OCI-LY7 (cell line): ENCODE measurements at regions of chr7 and their contacts with region 1.

Region 1: DNA sequence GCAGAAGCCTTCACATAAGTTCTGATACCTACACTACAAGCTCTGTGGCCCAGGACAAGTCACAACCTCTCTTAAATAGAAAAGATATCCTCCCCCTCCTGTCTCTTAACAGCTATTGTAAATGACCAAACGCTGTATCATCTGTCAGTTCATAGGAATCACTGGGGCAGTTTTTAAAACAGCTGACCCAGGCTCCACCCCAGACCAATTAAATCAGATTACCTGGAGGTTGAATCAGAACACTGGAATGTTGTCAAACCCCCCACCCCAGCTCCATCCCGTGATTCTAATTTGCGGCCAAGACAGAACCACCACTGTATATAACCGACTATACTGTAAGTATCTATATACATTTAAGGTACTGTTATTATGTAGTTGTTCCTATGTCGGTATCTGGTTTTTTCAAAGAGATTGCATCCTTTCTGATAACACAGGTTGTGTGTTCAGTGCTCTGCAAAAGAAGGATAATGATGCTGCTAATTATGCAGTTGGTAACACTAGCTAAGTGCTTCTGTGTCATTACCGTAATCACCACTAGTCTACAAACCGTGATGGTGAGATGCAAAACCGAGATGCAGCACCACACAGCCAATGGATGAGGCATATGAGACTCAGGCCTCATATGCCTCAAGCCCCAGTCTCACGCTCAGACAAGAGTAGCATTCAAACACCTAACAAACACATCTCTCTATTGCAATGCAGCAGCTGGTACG is 47.4 kb downstream of the TNS3 start:
- DNase-seq: peak; percentile 12
- H3K4me3 ChIP-seq: no peak overlapping the region
- H3K27ac ChIP-seq: no peak overlapping the region
- H3K4me1 ChIP-seq: no peaks in the 10 kb centered on the region
- CTCF ChIP-seq: peak; percentile 43; the same call in 1 of the 2 replicates

Region 2: GRCh38 chr7:47485640-47486435 is 48.6 kb before region 1 on chr7:
- CTCF ChIA-PET with region 1: no interaction called
- POLR2A ChIA-PET with region 1: no interaction called
- intact Hi-C with region 1: no loop called
- DNase-seq: no peak
- H3K4me3 ChIP-seq: no peak overlapping the region
- H3K27ac ChIP-seq: no peak overlapping the region
- H3K4me1 ChIP-seq: peaks cover 18% of the 10 kb centered on the region
- CTCF ChIP-seq: no peak

Region 3: GRCh38 chr7:47497367-47498096 is 36.9 kb before region 1 on chr7:
- CTCF ChIA-PET with region 1: no interaction called
- POLR2A ChIA-PET with region 1: no interaction called
- intact Hi-C with region 1: no loop called
- DNase-seq: peak; percentile 87
- H3K4me3 ChIP-seq: peak overlapping the region; percentile 32
- H3K27ac ChIP-seq: peak overlapping the region; percentile 86
- H3K4me1 ChIP-seq: peaks cover 53% of the 10 kb centered on the region
- CTCF ChIP-seq: no peak

Region 4: GRCh38 chr7:47697543-47697942 is 163.1 kb after region 1 on chr7:
- CTCF ChIA-PET with region 1: interaction called, 10 read pairs
- POLR2A ChIA-PET with region 1: no interaction called
- intact Hi-C with region 1: no loop called
- DNase-seq: no peak
- H3K4me3 ChIP-seq: no peak overlapping the region
- H3K27ac ChIP-seq: no peak overlapping the region
- H3K4me1 ChIP-seq: no peaks in the 10 kb centered on the region
- CTCF ChIP-seq: no peak